IMR-90 (cell line): ENCODE measurements at regions of chr18 and their contacts with region 1.

Region 1: DNA sequence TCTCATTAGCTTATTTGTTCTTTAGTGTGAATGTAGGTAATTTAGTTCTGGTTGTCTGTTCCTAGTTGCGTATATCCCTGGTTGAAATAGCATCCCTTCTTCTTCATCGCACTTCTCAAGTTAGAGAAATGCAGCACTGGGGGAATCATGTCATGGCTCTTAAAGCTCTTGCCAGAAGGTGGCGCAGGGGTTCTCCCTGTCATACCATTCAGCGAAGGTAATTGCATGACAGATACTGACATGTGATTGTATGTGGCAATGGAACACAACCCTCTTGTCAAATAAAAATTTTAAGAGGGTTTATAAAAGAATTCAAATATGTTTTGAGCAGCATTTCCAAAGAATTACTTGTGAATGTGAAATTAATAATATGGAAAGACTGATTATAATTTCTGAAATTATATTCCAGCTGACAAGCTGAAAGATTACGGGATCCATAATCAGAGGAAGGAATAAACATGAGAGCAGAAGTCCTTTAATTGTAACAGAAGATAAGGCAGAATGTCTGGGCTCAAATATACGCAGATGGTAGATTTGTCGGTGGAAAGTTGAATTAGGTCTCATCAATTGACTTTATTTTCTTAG is 411.7 kb downstream of the DSEL start:
- DNase-seq: peak; percentile 66
- ATAC-seq: peak; percentile 88
- H3K4me3 ChIP-seq: no peak overlapping the region
- H3K27ac ChIP-seq: no peak overlapping the region
- H3K4me1 ChIP-seq: no peaks in the 10 kb centered on the region
- H3K27me3 ChIP-seq: no peaks in the 10 kb centered on the region; the same call in 1 of the 2 replicates
- CTCF ChIP-seq: peak; percentile 72
- POLR2A ChIP-seq: no peak
- RAD21 ChIP-seq: peak; percentile 66

Region 2: GRCh38 chr18:67199993-67200617 is 95.3 kb after region 1 on chr18:
- CTCF ChIA-PET with region 1: interaction called, 12 read pairs
- POLR2A ChIA-PET with region 1: no interaction called
- dilution Hi-C with region 1: no loop called
- in situ Hi-C with region 1: loop called (anchors 5 kb)
- intact Hi-C with region 1: loop called (anchors 1 kb)
- DNase-seq: peak; percentile 69
- ATAC-seq: peak; percentile 93
- H3K4me3 ChIP-seq: no peak overlapping the region
- H3K27ac ChIP-seq: no peak overlapping the region
- H3K4me1 ChIP-seq: no peaks in the 10 kb centered on the region
- H3K27me3 ChIP-seq: no peaks in the 10 kb centered on the region
- CTCF ChIP-seq: peak; percentile 72
- POLR2A ChIP-seq: no peak
- RAD21 ChIP-seq: peak; percentile 70

Region 3: GRCh38 chr18:67545681-67546080 is 440.9 kb after region 1 on chr18:
- CTCF ChIA-PET with region 1: no interaction called
- POLR2A ChIA-PET with region 1: no interaction called
- dilution Hi-C with region 1: no loop called
- in situ Hi-C with region 1: no loop called
- intact Hi-C with region 1: no loop called
- DNase-seq: no peak
- ATAC-seq: no peak
- H3K4me3 ChIP-seq: no peak overlapping the region
- H3K27ac ChIP-seq: no peak overlapping the region
- H3K4me1 ChIP-seq: no peaks in the 10 kb centered on the region
- H3K27me3 ChIP-seq: no peaks in the 10 kb centered on the region
- CTCF ChIP-seq: no peak
- POLR2A ChIP-seq: no peak
- RAD21 ChIP-seq: no peak

Region 4: GRCh38 chr18:68060871-68061270 is 956.1 kb after region 1 on chr18:
- CTCF ChIA-PET with region 1: no interaction called
- POLR2A ChIA-PET with region 1: no interaction called
- dilution Hi-C with region 1: no loop called
- in situ Hi-C with region 1: no loop called
- intact Hi-C with region 1: no loop called
- DNase-seq: peak; percentile 9
- ATAC-seq: no peak
- H3K4me3 ChIP-seq: no peak overlapping the region
- H3K27ac ChIP-seq: no peak overlapping the region
- H3K4me1 ChIP-seq: 0 out of 2 replicates have a peak, but pooled peaks cover 1% of the 10 kb centered on the region
- H3K27me3 ChIP-seq: no peaks in the 10 kb centered on the region
- CTCF ChIP-seq: no peak
- POLR2A ChIP-seq: no peak
- RAD21 ChIP-seq: no peak

Region 5: DNA sequence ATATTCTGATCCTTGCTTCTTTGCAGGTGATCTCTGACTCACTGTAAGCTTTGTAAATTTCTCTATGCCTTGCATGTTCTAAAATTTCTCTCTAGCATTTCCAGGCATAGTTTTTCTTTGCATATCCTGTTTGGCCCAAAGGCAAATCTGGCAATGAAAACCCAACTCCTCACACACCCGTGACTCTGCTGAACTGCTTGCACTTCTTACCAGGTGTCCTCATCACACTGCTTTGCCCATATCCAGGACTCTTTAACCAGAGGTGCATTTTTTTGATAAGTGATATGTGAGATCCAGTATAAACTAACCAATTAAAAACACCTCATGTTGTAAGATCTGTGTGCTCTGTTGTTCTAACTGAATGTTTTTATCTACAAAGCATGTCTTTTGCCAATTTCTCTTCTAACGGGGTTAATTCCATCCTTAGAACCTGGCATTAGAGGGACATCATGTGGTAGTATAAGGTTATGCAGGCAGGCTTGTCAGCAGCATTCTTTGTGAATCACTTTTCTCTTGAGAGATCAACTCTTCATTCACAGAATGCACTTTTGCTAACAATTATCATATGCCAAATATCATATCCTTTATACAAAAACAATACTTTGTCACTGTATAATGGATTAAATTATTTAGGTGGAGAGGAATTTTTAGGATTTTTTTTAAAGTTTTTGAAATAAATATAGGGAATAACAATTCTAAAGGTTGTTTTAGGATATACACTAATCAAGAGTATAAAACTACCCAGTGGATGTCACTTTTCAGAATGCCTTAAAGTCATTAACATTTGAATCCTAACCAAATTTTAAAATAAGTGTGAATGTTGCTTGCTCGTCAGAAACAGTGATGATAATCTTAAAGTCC is 1630.9 kb after region 1 on chr18:
- CTCF ChIA-PET with region 1: no interaction called
- POLR2A ChIA-PET with region 1: no interaction called
- dilution Hi-C with region 1: no loop called
- in situ Hi-C with region 1: no loop called
- intact Hi-C with region 1: loop called (anchors 10 kb)
- DNase-seq: peak; percentile 74
- ATAC-seq: peak; percentile 94
- H3K4me3 ChIP-seq: no peak overlapping the region
- H3K27ac ChIP-seq: no peak overlapping the region
- H3K4me1 ChIP-seq: no peaks in the 10 kb centered on the region
- H3K27me3 ChIP-seq: no peaks in the 10 kb centered on the region
- CTCF ChIP-seq: peak; percentile 83
- POLR2A ChIP-seq: no peak
- RAD21 ChIP-seq: peak; percentile 90